Activated CD8-positive, alpha-beta memory T cell treated with anti-CD3 and anti-CD28 coated beads, Interleukin-2, amount 10 ng/mL, durations not matched to agents 7 days and 5 days (primary cell): ENCODE measurements at regions of chr5 and their contacts with region 1.

Region 1: GRCh38 chr5:119340597-119341218 is 15.1 kb upstream of the TNFAIP8 start:
- DNase-seq: peak; percentile 93
- ATAC-seq: peak; percentile 65
- H3K4me3 Mint-ChIP-seq: peak overlapping the region; percentile 77
- H3K27ac Mint-ChIP-seq: peak overlapping the region; percentile 95
- H3K4me1 Mint-ChIP-seq: peaks cover 92% of the 10 kb centered on the region
- H3K27me3 Mint-ChIP-seq: no peaks in the 10 kb centered on the region

Region 2: DNA sequence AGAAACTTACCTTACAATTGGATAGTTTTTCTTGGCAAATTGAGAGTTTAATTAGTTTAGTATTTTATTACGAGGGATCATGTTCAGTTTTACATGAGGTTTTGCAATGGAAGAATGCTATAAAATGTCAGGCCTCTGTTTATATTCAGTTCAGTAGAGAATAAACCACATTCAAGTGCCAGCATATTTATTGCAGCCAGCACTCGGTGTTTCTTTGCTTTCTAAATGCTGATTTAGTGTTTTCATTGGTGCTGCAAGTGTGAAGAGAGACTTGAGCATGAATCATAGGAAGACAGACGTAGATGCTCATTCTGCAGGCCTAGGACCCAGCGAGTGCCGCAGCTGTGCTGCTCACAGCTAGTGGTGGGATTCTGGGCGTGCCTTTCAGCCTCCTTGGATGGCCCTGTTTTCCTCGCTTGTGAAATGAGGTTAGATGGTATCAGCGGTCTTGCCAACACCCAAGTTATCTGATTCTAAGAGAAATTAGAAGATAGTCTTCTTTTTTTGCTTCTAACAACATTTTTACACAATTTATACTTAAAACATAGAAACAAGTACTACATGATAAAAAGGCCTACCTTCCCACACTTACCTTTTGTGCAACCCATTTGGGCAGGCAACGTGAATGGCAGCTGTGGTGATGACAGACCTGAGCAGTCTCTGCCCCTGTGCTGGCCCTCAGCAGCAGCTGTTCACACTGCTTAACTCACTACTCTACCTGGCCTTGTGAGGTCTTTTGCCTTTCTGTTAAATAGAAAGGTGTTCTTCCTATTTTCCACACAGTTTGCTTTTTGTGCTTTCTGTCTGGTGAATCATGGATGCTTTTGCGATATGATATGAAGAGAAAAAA is 11.7 kb before region 1 on chr5:
- CTCF ChIA-PET with region 1: interaction called, 34 read pairs
- DNase-seq: peak; percentile 83
- ATAC-seq: peak; percentile 71
- H3K4me3 Mint-ChIP-seq: peak overlapping the region; percentile 47
- H3K27ac Mint-ChIP-seq: peak overlapping the region; percentile 92
- H3K4me1 Mint-ChIP-seq: peaks cover 89% of the 10 kb centered on the region
- H3K27me3 Mint-ChIP-seq: no peaks in the 10 kb centered on the region

Region 3: GRCh38 chr5:119355685-119356611 is 15.2 kb after region 1 on chr5 and contains the start of gene TNFAIP8:
- CTCF ChIA-PET with region 1: interaction called, 160 read pairs
- DNase-seq: peak; percentile 71
- ATAC-seq: peak; percentile 59
- H3K4me3 Mint-ChIP-seq: peak within 1 kb of the TSS; percentile 91
- H3K27ac Mint-ChIP-seq: peak within 1 kb of the TSS; percentile 90
- H3K4me1 Mint-ChIP-seq: peaks cover 75% of the 10 kb centered on the region
- H3K27me3 Mint-ChIP-seq: no peaks in the 10 kb centered on the region
- total RNA-seq, gene TNFAIP8: 106 to 109 TPM